MCF 10A (cell line): ENCODE measurements at regions of chr11 and their contacts with region 1.

Region 1: DNA sequence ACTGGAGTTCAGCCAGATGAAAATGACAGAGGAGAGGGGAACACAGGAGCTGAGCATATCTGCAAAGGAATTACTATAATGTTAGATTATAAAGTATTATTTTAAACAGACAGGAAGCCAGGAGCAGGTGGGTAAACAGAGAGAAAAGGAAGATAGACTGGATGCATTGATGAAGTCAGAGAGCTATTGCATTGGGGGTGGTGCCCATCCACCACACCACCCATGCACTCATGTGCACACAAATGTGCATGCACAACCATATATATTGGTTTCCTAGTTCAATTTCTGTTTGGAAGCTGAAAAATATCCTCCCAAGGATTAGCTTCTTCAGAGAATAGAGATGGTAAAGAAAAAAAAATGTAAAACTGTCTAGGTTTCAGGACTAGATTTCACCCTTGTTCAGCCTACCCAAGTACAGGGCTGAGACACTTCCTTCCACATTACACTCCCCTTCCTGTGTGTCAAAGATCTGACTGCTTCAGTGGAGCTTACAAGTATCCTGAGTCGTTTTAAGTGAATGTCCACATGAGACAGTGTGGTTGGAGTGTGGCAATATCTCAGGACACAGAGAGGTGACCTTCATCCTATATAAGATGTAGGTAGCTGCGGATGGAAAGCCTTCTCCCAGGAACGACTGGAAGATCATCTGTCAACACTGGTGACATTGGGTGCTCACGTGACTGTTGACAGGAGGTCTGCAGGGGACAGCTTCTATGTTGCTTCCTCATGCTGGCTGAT is 12.2 kb upstream of the SMPD1 start:
- DNase-seq: no peak
- H3K4me3 Mint-ChIP-seq: no peak overlapping the region
- H3K27ac Mint-ChIP-seq: no peak overlapping the region
- H3K4me1 Mint-ChIP-seq: no peaks in the 10 kb centered on the region
- H3K27me3 Mint-ChIP-seq: peaks cover 12% of the 10 kb centered on the region
- CTCF ChIP-seq: no peak

Region 2: GRCh38 chr11:6353367-6353987 is 24.6 kb before region 1 on chr11:
- CTCF ChIA-PET with region 1: interaction called, 47 read pairs
- POLR2A ChIA-PET with region 1: no interaction called
- intact Hi-C with region 1: no loop called
- DNase-seq: peak; percentile 71
- H3K4me3 Mint-ChIP-seq: no peak overlapping the region
- H3K27ac Mint-ChIP-seq: no peak overlapping the region
- H3K4me1 Mint-ChIP-seq: peaks cover 11% of the 10 kb centered on the region
- H3K27me3 Mint-ChIP-seq: no peaks in the 10 kb centered on the region
- CTCF ChIP-seq: peak; percentile 96

Region 3: DNA sequence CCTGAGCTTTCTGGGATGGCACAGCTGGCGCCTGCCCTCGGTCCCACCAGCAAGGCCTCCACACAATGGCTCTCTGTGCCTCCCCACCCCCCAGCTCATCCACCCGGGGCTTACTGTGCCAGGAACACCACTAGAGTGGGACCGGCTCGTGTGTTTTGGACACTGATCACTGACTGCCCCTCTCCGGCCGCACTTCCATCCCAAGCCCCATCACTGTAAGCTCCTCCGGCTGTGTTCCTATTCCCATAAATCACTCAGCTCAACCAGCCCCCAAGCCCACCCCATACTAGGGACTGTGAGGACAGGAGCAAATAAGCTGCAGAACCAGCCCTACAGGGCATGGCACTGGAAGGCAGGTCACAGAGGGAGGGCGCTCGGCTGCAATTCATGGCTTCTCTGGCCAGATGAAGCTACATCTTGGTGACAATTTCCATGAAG is 33.5 kb after region 1 on chr11:
- CTCF ChIA-PET with region 1: interaction called, 17 read pairs
- POLR2A ChIA-PET with region 1: no interaction called
- intact Hi-C with region 1: no loop called
- DNase-seq: no peak
- H3K4me3 Mint-ChIP-seq: no peak overlapping the region
- H3K27ac Mint-ChIP-seq: no peak overlapping the region
- H3K4me1 Mint-ChIP-seq: no peaks in the 10 kb centered on the region
- H3K27me3 Mint-ChIP-seq: peaks cover 9% of the 10 kb centered on the region
- CTCF ChIP-seq: no peak

Region 4: DNA sequence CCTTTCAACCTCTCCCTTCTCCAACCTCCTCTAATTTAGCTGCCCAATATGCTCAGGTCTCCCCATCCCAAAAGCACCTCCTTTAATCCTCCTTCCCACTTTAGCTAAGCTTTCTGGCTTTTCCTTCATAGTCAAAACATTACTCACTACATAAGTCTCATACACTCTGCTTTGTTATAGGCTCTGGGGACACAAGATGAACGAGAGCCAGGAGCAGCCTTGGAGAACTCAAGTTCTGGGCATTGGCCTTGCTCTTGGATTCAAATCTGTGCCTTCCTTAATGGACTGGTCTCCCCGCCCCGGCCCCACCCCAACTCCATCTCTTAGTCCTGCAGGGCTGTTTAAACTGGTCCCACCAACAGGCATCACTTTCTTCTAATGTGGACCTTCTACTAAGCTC is 74.1 kb after region 1 on chr11:
- CTCF ChIA-PET with region 1: interaction called, 469 read pairs
- POLR2A ChIA-PET with region 1: interaction called, 3 read pairs
- intact Hi-C with region 1: no loop called
- DNase-seq: no peak
- H3K4me3 Mint-ChIP-seq: no peak overlapping the region
- H3K27ac Mint-ChIP-seq: no peak overlapping the region
- H3K4me1 Mint-ChIP-seq: no peaks in the 10 kb centered on the region
- H3K27me3 Mint-ChIP-seq: no peaks in the 10 kb centered on the region
- CTCF ChIP-seq: no peak

Region 5: DNA sequence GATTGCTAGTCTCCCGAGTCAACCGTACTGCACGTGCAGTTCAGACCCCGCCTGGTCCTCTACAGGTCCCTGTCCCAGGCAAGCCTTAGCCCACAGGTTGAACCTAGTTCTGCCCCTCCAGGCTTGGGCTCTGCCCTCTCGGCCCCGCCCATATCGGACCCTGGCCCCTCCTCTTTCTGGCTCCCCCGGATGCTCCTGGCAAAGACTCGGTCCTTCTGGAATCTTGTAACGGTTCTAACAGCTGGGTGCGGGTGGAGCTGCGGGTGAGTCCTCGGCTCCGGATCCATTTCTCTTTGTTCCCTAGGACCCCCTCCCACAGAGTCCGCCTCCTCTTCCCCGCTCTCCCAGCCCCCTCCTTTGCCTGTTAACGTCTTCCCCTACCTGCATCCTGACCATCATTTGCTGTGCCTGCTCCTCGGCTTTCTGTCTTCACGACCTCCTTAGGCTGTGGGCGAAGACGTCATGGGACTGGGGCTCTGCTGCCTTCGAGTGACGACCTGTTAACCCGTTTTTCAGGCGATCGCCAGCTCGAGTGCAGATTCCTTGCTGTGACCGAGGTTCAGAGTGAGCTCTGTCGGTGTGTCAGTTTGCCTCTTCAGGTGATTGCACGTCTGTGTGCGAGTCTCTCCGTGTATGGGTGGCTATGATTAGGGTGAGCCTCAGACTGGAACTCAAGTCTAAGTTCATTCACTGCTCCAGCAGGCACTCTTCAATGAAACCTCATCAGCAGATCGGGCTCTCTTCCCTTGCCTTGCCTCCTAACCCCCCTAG is 119.2 kb after region 1 on chr11 and contains the start of gene DNHD1:
- CTCF ChIA-PET with region 1: interaction called, 47 read pairs
- POLR2A ChIA-PET with region 1: no interaction called
- intact Hi-C with region 1: no loop called
- DNase-seq: no peak
- H3K4me3 Mint-ChIP-seq: no peak within 1 kb of the TSS
- H3K27ac Mint-ChIP-seq: no peak within 1 kb of the TSS
- H3K4me1 Mint-ChIP-seq: no peaks in the 10 kb centered on the region
- H3K27me3 Mint-ChIP-seq: no peaks in the 10 kb centered on the region
- CTCF ChIP-seq: no peak
- total RNA-seq, gene DNHD1: 18.3 and 26.5 TPM in 2 replicates

Region 6: DNA sequence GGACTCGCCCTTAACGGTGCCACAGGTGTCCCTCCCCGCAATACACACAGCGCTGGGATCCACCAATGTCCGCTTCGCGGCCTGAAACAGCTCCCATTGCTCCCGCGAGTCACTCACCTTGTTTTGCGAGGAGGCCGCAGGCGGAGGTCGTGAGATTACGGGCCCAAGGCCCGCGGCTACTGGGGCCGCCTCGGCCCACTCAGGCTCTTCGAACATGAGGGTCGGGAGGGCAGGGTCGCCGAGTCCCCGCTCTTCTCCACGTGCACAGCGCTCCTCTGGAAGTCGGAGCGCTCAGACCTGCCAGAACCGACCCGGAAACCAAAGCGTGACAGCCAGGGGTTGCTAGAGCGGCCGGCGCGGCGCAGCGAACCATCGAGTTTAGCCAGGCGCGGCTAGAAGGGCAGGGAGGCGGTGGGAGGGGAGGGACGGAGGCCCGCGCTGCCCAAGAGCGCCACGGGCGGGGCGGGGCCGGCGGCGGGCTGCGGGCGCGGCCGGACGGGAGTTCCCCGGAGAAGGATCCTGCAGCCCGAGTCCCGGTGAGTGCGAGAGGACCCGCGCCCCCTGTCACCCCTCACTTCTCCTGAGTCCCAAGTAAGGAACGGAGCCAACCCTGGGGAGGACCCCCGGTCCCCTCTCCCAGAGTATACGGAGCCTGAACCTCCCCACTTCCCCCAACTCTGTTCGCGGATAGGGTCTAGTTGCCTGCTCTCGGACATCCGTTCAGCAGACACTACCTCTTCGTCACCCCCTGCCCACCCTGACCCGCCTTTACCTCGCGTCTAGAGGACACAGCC is 225.4 kb after region 1 on chr11 and contains the starts of genes ILK and RRP8:
- CTCF ChIA-PET with region 1: interaction called, 5 read pairs
- POLR2A ChIA-PET with region 1: no interaction called
- intact Hi-C with region 1: loop called (anchors 5 kb)
- DNase-seq: peak; percentile 90
- H3K4me3 Mint-ChIP-seq: no peak within 1 kb of the TSS
- H3K27ac Mint-ChIP-seq: no peak within 1 kb of the TSS
- H3K4me1 Mint-ChIP-seq: peaks cover 22% of the 10 kb centered on the region
- H3K27me3 Mint-ChIP-seq: no peaks in the 10 kb centered on the region
- CTCF ChIP-seq: no peak
- total RNA-seq, gene ILK: 78.9 and 92.3 TPM in 2 replicates
- total RNA-seq, gene RRP8: 23.4 and 27.6 TPM in 2 replicates